ENCODE measurements at regions of chr4 and their contacts with region 1.

Region 1: GRCh38 chr4:116358588-116359222 is 726.7 kb downstream of the TRAM1L1 start:
- DNase-seq: peak; percentile 89
- H3K4me3 ChIP-seq: no peak overlapping the region
- H3K27ac ChIP-seq: no peak overlapping the region
- H3K4me1 ChIP-seq: no peaks in the 10 kb centered on the region
- H3K27me3 ChIP-seq: no peaks in the 10 kb centered on the region
- CTCF ChIP-seq: peak; percentile 74

Region 2: DNA sequence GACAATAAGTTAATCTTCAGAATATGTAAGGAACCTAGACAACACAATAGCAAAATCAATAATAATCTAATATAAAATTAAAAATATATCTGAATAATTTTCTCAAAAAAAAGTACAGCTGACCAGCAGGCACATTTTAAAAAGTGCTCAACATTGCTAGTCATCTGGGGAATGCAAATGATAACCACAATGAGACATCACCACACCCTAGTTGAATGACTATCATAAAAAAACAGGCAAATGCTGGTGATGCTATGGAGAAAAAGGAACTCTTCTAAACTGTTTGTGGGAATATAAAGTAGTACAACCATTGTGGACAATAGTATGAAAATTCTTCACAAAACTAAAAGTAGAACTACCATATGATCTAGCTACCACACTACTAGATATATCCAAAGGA is 288.4 kb before region 1 on chr4:
- CTCF ChIA-PET with region 1: no interaction called
- POLR2A ChIA-PET with region 1: no interaction called
- intact Hi-C with region 1: loop called (anchors 10 kb)
- DNase-seq: no peak
- H3K4me3 ChIP-seq: no peak overlapping the region
- H3K27ac ChIP-seq: no peak overlapping the region
- H3K4me1 ChIP-seq: no peaks in the 10 kb centered on the region
- H3K27me3 ChIP-seq: no peaks in the 10 kb centered on the region
- CTCF ChIP-seq: no peak

Region 3: GRCh38 chr4:116531870-116532269 is 173.2 kb after region 1 on chr4:
- CTCF ChIA-PET with region 1: no interaction called
- POLR2A ChIA-PET with region 1: no interaction called
- intact Hi-C with region 1: loop called (anchors 10 kb)
- DNase-seq: peak; percentile 99
- H3K4me3 ChIP-seq: no peak overlapping the region
- H3K27ac ChIP-seq: peak overlapping the region; percentile 96
- H3K4me1 ChIP-seq: peaks cover 47% of the 10 kb centered on the region
- H3K27me3 ChIP-seq: no peaks in the 10 kb centered on the region
- CTCF ChIP-seq: no peak

Region 4: GRCh38 chr4:116598155-116598979 is 239.7 kb after region 1 on chr4:
- CTCF ChIA-PET with region 1: no interaction called
- POLR2A ChIA-PET with region 1: no interaction called
- intact Hi-C with region 1: no loop called
- DNase-seq: no peak
- H3K4me3 ChIP-seq: no peak overlapping the region
- H3K27ac ChIP-seq: no peak overlapping the region
- H3K4me1 ChIP-seq: no peaks in the 10 kb centered on the region
- H3K27me3 ChIP-seq: no peaks in the 10 kb centered on the region
- CTCF ChIP-seq: no peak

Region 5: GRCh38 chr4:117549524-117549923 is 1190.8 kb after region 1 on chr4:
- CTCF ChIA-PET with region 1: no interaction called
- POLR2A ChIA-PET with region 1: no interaction called
- intact Hi-C with region 1: loop called (anchors 10 kb)
- DNase-seq: peak; percentile 4
- H3K4me3 ChIP-seq: no peak overlapping the region
- H3K27ac ChIP-seq: no peak overlapping the region
- H3K4me1 ChIP-seq: no peaks in the 10 kb centered on the region
- H3K27me3 ChIP-seq: no peaks in the 10 kb centered on the region
- CTCF ChIP-seq: no peak

Region 6: GRCh38 chr4:118278473-118279274 is 1920.0 kb after region 1 on chr4:
- CTCF ChIA-PET with region 1: no interaction called
- POLR2A ChIA-PET with region 1: no interaction called
- intact Hi-C with region 1: loop called (anchors 10 kb)
- DNase-seq: peak; percentile 96
- H3K4me3 ChIP-seq: peak overlapping the region; percentile 83
- H3K27ac ChIP-seq: peak overlapping the region; percentile 94
- H3K4me1 ChIP-seq: peaks cover 15% of the 10 kb centered on the region
- H3K27me3 ChIP-seq: no peaks in the 10 kb centered on the region
- CTCF ChIP-seq: no peak